Activated B cell treated with CpG ODN at 0.5 μM for 24 hours (primary cell): ENCODE measurements at regions of chr11 and their contacts with region 1.

Region 1: DNA sequence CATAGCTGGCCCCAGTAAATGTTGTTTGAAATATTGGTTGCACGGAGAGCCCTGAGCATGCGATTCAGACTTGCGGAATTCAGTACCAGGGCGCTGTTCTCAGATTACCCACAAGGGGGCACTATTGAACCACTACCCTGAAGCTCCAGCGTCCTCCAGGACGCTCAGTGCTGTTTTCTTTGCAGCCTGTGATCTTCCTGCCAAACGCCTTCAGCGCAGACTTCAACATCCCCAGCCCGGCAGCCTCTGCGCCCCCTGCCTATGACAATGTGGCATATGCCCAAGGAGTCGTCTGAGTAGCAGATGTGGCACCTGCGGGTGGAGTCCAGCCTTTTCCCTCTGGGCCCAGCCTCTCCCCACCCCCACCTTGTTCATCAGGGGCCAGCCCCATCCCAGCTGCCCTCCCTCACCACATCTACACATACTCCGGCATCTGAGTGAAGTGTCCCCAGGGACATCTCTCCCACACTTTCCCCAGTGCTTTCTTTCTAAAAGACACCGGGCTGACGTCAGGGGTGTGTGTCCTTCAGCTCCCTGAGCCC is 9.6 kb upstream of the MS4A10 start:
- DNase-seq: peak; percentile 64
- ATAC-seq: peak; percentile 94
- H3K4me3 Mint-ChIP-seq: no peak overlapping the region
- H3K27ac Mint-ChIP-seq: no peak overlapping the region
- H3K4me1 Mint-ChIP-seq: peaks cover 11% of the 10 kb centered on the region
- H3K27me3 Mint-ChIP-seq: peaks cover 10% of the 10 kb centered on the region
- CTCF ChIP-seq: peak; percentile 44

Region 2: GRCh38 chr11:60756307-60757032 is 19.0 kb before region 1 on chr11 and contains the start of gene MS4A15:
- CTCF ChIA-PET with region 1: interaction called, 86 read pairs
- POLR2A ChIA-PET with region 1: no interaction called
- intact Hi-C with region 1: no loop called
- DNase-seq: no peak
- ATAC-seq: peak; percentile 50
- H3K4me3 Mint-ChIP-seq: no peak within 1 kb of the TSS
- H3K27ac Mint-ChIP-seq: no peak within 1 kb of the TSS
- H3K4me1 Mint-ChIP-seq: peaks cover 18% of the 10 kb centered on the region
- H3K27me3 Mint-ChIP-seq: peaks cover 29% of the 10 kb centered on the region
- CTCF ChIP-seq: no peak
- total RNA-seq, gene MS4A15: not detected in 2 replicates

Region 3: DNA sequence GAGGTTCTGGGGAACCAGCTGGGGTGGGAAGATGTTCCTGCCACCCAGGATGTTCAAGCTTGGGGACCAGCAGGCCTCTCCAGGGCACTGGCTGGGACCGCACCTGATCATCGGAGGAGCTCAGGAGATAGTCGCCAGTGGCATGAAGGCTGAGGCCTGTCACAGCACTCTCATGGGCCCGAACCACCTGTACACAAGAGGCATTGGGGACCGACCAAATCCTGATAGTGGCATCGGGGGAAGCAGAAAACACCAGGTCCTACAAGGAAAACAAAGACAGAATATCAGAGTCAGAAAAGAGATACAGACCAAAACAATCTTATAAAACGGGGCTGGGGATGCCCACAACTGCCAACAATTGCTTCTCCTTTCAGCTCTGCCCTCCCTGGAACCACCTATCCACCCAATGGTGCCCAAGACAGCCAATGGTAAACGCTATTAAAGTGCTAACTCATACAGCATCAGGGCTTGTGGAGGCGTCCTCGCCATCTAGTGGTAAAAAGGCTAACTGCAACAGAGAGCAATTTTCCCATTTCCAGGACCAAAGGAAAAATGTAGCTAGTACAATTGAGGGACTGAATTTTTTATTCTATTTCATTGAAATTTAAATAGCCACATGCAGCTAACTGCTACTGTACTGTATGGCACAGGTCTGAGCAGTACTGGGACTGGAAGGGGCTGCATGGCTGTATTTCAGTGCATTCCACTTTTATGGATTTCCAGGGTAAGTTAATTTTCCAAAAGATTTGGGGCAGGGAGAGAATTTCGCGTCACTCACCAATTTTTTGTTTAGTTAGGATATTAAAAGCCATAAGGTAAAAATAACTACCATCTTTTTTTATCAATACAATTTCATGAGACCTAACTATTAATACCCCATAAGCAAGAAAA is 123.8 kb after region 1 on chr11:
- CTCF ChIA-PET with region 1: interaction called, 3 read pairs
- POLR2A ChIA-PET with region 1: no interaction called
- intact Hi-C with region 1: loop called (anchors 1 kb)
- DNase-seq: no peak
- ATAC-seq: peak; percentile 90
- H3K4me3 Mint-ChIP-seq: no peak overlapping the region
- H3K27ac Mint-ChIP-seq: no peak overlapping the region
- H3K4me1 Mint-ChIP-seq: peaks cover 10% of the 10 kb centered on the region
- H3K27me3 Mint-ChIP-seq: no peaks in the 10 kb centered on the region
- CTCF ChIP-seq: peak; percentile 95

Region 4: DNA sequence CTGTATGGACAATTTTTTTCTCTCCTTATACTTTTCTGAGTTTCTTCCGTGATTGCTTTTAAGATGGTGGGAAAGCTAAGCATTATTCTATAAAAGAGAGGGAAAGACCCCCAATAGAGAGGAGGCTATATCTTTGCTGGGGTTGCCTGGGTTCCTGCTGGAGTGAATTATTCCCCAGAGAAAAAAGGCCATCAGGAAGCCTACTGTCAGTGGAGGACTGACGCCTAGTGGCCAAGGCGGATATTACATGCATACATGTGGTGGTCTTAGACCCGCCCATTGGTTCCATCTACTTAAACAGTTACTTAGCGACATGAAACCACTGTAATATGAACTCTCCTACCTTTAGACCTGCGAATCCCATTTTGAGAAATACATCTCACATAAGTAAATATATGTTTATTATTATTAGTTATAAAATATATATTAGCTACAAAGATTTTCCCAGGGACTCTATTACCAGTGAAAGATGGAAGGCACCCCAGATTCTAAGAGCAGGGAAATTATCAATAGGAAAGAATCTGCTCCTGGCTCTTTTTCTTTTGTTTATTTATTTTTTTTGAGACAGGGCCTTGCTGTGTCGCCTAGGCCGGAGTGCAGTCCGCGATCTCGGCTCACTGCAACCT is 412.1 kb after region 1 on chr11:
- CTCF ChIA-PET with region 1: no interaction called
- POLR2A ChIA-PET with region 1: no interaction called
- intact Hi-C with region 1: loop called (anchors 1 kb)
- DNase-seq: peak; percentile 63
- ATAC-seq: peak; percentile 100
- H3K4me3 Mint-ChIP-seq: no peak overlapping the region
- H3K27ac Mint-ChIP-seq: no peak overlapping the region
- H3K4me1 Mint-ChIP-seq: peaks cover 4% of the 10 kb centered on the region
- H3K27me3 Mint-ChIP-seq: no peaks in the 10 kb centered on the region
- CTCF ChIP-seq: peak; percentile 98

Region 5: DNA sequence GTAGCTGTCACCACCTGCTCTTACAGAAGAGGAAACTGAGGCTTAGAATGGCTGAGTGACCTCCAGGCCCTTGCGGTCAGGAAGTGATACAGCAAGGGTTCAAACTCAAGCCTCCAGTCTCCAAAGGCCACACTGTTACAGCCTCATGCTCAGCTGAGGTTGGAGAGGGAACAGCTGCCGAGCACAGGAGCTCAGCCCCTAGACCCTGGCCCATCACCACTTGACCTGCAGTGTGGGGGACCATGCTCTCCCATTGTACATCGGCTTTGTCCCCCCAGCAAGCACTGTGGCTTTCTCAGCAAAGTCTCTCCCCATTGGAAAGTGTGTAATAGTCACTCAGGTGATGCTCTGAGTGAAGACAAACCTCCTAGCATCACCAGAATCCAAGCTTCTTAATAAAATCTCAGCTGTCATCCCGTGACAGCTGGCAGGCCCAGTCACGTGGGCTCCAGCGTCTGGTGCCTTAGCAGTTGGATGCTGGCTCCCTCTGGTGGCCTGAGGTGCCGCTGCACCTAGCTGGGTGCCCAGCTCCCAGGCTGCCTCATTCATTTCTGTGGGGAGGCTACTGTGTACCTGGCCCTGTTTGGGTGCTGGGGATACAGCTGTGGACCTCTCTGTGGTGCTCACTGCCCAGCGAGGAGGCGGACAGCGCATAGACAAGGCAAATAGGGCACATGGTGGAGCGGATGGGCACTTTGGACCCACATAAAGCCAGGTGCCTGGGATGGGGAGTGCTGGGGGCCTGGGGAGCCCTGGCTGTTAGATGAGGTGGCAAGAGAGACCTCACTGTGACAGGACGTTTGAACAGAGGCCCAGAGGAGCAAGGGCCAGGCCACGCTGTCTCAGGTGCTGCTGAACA is 957.9 kb after region 1 on chr11:
- CTCF ChIA-PET with region 1: no interaction called
- POLR2A ChIA-PET with region 1: no interaction called
- intact Hi-C with region 1: no loop called
- DNase-seq: peak; percentile 64
- ATAC-seq: peak; percentile 96
- H3K4me3 Mint-ChIP-seq: no peak overlapping the region
- H3K27ac Mint-ChIP-seq: no peak overlapping the region
- H3K4me1 Mint-ChIP-seq: peaks cover 4% of the 10 kb centered on the region
- H3K27me3 Mint-ChIP-seq: no peaks in the 10 kb centered on the region
- CTCF ChIP-seq: peak; percentile 44